Psoas muscle (tissue), 8 donors: ENCODE measurements at regions of chr15 and their contacts with region 1.

Region 1: DNA sequence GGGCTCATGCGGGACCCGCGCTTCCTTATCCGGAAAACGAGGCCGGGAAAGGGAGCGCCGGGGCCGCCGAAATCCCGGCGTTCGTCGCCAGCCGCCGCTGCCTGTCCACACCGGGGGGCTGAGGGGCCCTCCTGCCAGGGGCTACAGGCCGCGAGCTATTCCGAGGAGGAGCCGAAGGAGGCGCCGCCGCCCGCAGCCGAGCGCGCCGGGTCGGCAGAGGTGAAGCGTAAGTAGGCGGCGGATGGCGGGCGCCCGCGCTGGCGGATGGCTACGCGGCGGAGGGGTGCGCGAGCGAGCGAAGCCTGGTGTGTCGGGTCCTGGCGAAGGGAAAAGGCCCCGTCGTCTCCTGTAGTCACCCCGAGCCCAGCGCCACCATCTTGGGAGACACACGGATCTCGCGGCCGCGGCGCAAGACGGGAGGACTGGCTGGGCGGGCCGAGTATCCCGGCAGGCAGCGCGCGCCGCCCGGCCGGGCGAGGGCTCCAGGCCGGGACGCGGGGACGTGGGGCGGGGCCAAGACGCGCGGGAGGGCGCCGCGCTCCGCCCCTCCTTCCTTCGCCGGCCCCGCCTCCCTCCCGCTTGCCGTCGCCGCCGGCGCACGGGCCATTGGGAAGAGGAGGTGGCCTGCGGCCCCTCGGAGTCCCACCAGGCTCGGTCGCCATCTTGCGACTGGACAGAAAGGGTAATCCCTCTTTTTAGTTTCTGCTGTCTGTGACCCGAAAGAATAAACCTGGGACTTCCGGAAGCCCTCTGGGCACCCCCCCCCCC is at the start of gene UBE3A:
- DNase-seq: peak; percentile 93 to 96
- ATAC-seq: peak; percentile 91 to 96 (median 96)
- H3K4me3 ChIP-seq: peak within 1 kb of the TSS; percentile 100
- H3K27ac ChIP-seq: peak within 1 kb of the TSS; percentile 99
- H3K4me1 ChIP-seq: peaks cover 31% of the 10 kb centered on the region
- H3K27me3 ChIP-seq: no peaks in the 10 kb centered on the region
- CTCF ChIP-seq: peak; percentile 14
- total RNA-seq, gene UBE3A: 144 to 198 (median 159) TPM

Region 2: DNA sequence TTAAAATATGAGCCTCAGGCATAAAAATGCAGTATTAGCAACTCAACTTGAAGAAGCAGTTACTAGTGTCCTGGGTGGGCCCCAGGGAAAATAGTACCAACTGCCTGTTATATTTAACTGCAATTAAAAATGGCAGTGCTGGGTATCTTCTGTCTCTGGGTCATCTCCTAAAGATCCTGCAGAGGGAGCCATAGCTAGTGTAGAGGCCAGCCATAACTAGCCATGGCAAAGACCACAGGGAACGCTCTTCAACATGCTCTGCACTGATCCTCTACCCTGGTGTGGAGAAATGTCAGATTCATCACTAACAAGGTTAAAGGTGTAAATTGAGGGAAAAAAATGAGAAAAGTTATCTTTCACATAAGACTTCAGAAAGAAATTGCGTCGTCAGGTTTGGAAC is 302.7 kb before region 1 on chr15:
- intact Hi-C with region 1: loop called in 1 of 2 experiments (anchors 10 kb)
- DNase-seq: no peak
- ATAC-seq: peak; percentile 55 to 88 (median 82)
- H3K4me3 ChIP-seq: no peak overlapping the region
- H3K27ac ChIP-seq: no peak overlapping the region
- H3K4me1 ChIP-seq: no peaks in the 10 kb centered on the region
- H3K27me3 ChIP-seq: no peaks in the 10 kb centered on the region
- CTCF ChIP-seq: peak; percentile 33

Region 3: DNA sequence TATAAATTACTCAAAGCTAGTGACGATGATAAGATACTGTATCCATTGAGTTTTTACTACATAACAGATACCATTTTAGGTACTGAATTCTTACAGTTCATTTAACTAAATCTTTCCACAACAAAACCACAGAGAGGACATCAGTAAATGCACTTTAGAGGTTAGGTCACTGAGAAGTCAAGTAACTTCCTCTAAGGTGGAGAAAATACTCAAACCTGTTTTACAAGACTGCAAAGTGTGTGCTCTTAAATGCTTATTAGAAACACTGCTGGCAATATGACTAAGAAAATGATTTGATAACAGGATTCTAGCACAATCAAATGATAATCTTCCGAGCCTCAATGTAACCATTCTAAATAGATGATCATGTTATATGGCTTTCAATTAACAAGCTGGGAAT is 99.4 kb before region 1 on chr15:
- intact Hi-C with region 1: loop called in 1 of 2 experiments (anchors 5 kb)
- DNase-seq: no peak
- ATAC-seq: no peak
- H3K4me3 ChIP-seq: no peak overlapping the region
- H3K27ac ChIP-seq: no peak overlapping the region
- H3K4me1 ChIP-seq: no peaks in the 10 kb centered on the region
- H3K27me3 ChIP-seq: no peaks in the 10 kb centered on the region
- CTCF ChIP-seq: no peak

Region 4: GRCh38 chr15:25385986-25386385 is 52.8 kb before region 1 on chr15:
- intact Hi-C with region 1: loop called in 1 of 2 experiments (anchors 5 kb)
- DNase-seq: no peak
- ATAC-seq: peak in 1 of 4 donors; percentile 19
- H3K4me3 ChIP-seq: no peak overlapping the region
- H3K27ac ChIP-seq: no peak overlapping the region
- H3K4me1 ChIP-seq: peaks cover 12% of the 10 kb centered on the region
- H3K27me3 ChIP-seq: no peaks in the 10 kb centered on the region
- CTCF ChIP-seq: no peak

Region 5: DNA sequence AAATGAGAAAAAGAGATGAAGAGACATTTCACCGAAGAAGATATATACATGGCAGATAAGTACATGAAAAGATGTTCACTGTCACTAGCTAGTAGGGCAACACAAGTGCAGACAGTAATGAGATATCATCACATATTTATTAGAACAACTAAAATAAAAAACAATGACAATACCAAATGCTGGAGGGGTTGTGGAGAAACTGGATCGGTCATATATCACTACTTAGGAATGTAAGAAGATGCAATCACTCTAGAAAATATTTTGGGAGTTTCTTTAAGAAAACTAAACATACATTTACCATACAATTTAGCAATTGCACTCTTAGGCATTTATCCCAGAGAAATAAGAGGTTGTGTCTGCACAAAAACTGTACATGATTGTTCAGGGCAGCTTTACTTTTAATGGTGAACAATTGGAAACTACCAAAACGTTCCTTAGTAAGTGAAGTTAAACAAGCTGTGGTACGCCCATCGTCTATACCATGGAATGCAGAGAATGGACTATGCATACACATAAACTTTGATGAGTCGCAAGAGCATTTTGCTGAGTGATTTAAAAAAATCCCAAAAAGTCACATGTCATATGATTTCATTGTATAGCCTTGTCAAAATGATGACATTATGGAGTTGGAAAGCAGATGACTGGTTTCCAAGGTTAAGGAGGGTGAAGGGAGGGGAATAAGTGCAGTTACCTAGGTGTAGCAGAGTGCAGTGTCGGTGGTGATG is 149.0 kb after region 1 on chr15:
- intact Hi-C with region 1: no loop called
- DNase-seq: no peak
- ATAC-seq: no peak
- H3K4me3 ChIP-seq: no peak overlapping the region
- H3K27ac ChIP-seq: no peak overlapping the region
- H3K4me1 ChIP-seq: no peaks in the 10 kb centered on the region
- H3K27me3 ChIP-seq: no peaks in the 10 kb centered on the region
- CTCF ChIP-seq: no peak

Region 6: DNA sequence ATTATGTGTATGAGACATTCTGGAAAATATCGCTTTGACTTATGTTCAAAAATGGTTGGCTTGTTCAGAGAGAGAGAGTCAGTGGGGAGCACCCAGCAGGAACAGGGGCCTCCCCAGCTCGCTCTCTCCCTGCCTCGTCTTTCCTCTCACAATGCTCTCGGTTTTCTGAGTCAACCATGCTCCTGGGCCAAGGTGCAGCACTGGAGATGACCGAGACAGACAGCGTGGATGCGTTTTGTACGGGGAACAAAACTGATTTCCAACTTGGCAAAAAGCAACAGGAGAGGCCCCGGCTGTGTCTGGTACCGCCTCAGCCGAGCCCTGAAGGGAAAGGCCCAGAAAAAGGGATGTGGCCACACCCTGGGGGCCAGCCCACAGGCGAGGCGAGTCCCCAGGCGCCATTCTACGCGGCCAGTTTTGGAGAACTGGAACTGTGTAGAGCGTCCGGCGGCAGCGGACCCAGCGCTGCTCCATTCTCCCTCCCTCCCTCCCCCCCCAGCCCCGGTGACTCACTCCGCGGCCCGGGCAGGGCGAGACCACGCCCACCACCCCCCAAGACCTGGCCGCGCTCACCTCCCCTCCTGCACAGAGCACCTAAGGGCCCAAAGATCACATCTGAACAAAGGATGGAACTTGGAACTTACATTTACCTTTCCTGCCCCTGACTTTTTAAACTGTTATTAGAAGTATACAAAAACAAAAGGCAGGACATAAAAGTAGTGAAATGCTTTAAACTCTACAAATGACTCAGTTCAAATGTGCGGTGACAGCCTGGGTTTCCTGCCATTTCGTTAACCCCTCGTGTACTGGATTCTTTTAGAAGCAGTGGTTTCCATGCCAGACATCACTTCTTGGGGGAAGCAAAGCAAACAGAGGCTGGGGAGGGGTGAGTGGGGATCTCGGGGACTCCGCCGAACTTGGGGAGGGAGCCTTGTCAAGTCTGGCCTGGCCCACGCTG is 411.6 kb after region 1 on chr15:
- intact Hi-C with region 1: no loop called
- DNase-seq: peak; percentile 80 to 88
- ATAC-seq: peak; percentile 74 to 90 (median 84)
- H3K4me3 ChIP-seq: peak overlapping the region; percentile 59
- H3K27ac ChIP-seq: no peak overlapping the region
- H3K4me1 ChIP-seq: peaks cover 7% of the 10 kb centered on the region
- H3K27me3 ChIP-seq: no peaks in the 10 kb centered on the region
- CTCF ChIP-seq: no peak